ENCODE measurements at regions of chr19 and their contacts with region 1.

Region 1: GRCh38 chr19:44770550-44771257 is 7.0 kb upstream of the CBLC start:
- DNase-seq: peak; percentile 98
- H3K4me3 ChIP-seq: peak overlapping the region; percentile 50
- H3K27ac ChIP-seq: no peak overlapping the region
- H3K4me1 ChIP-seq: peaks cover 11% of the 10 kb centered on the region
- CTCF ChIP-seq: peak; percentile 91

Region 2: DNA sequence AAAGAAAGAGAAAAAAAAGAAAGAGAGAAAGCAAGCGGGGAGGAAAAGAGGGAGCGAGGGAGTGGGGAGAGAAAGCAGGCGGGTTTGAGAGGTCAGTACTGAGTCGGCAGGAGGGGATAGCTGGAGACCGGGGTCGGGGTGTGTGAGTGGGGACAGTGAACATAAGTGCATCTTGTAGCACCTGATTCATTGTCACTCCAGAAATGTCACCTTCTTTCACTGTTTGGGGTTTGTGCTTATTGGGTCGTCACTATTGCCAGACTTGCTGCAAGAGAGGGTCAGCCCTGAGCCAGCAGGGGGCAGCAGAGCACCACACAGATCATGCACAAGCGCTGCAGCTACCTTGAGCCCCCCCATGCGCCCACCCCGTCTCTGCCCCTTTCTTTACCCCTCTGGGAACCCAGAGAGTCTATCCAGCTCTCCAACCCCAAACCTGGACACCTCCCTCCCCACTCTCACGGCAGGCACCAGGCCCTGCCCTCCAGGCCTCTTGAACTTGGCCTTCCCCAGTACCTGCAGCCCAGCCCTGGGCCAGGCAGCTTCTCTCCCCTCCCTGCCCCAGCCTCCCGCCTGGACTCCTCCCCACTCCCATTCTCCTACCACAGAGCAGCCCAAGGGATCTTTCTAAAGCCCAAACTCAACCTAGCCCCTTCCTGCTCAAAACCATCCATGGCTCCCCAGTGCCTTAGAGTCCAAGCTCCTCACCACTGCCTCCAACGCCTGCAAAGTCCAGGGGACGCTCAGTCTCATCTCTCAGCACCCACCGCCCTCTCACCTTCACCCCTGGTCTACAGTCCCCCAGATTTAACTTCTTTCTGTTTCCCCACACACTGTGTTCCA is 81.4 kb before region 1 on chr19:
- CTCF ChIA-PET with region 1: interaction called, 8 read pairs
- POLR2A ChIA-PET with region 1: no interaction called
- intact Hi-C with region 1: loop called (anchors 1 kb)
- DNase-seq: peak; percentile 73
- H3K4me3 ChIP-seq: no peak overlapping the region
- H3K27ac ChIP-seq: no peak overlapping the region
- H3K4me1 ChIP-seq: peaks cover 29% of the 10 kb centered on the region
- CTCF ChIP-seq: peak; percentile 95

Region 3: DNA sequence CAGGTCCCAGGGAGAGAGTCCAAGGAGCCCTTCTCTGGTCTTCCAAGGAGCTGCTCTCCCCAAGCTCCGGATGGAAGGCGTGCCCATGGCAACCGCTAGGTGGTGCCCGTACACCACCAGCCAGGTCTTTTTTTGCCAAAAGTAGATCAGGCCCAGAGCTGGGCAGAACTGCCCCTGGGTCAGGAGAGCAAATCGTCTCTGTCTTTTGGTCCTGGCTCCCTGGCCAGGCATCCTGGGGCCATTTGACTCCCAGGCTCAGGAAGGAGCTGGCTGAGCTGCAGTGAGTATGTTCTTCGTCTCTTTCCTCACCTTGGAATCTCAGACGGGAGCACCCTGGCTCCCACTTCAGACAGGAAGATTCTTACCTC is 46.8 kb before region 1 on chr19:
- CTCF ChIA-PET with region 1: interaction called, 9 read pairs
- POLR2A ChIA-PET with region 1: interaction called, 8 read pairs
- intact Hi-C with region 1: loop called (anchors 1 kb)
- DNase-seq: peak; percentile 84
- H3K4me3 ChIP-seq: no peak overlapping the region
- H3K27ac ChIP-seq: no peak overlapping the region
- H3K4me1 ChIP-seq: peaks cover 53% of the 10 kb centered on the region
- CTCF ChIP-seq: peak; percentile 99

Measured in OCI-LY7 (cell line).